ENCODE measurements at regions of chr2 and their contacts with region 1.

Region 1: DNA sequence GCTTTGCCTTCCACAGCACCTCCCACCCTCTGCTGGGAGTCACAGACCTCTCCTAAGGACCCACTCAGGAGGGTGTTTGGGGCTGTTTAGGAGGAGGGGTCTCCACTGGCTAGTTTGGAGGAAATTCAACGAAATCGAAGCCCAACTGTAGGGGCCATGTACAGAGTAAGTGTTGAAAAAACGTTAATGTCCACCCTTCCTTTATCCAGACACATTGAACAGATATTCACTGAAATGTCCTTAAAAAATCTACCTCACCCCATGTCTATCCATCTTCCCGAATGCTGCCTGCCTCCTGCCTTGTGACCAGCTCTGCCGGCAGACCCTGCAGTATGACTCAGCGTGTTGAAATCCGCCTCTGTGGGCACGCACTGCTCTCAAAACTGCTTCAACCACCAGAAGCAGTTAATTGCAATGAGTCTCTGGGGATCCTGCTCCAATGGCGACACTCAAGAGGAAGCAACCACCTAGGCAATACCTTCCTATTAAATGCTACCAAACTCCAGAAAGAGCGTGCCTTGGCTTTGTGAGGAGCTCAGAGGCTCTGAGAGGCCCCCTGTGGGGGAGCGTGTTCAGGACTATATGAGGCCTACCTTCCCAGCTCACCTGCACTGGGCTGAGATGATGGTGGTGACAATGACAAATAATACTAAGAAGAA is 61.4 kb upstream of the RTN4 start:
- DNase-seq: peak; percentile 77 to 96
- H3K4me3 ChIP-seq: peak overlapping the region; percentile 11; the same call in 1 of the 2 replicates
- H3K27ac ChIP-seq: peak overlapping the region; percentile 75
- H3K4me1 ChIP-seq: peaks cover 98% of the 10 kb centered on the region
- H3K27me3 ChIP-seq: no peaks in the 10 kb centered on the region
- CTCF ChIP-seq: no peak

Region 2: GRCh38 chr2:54240515-54241469 is 870.9 kb before region 1 on chr2:
- CTCF ChIA-PET with region 1: no interaction called
- POLR2A ChIA-PET with region 1: no interaction called
- intact Hi-C with region 1: no loop called
- DNase-seq: no peak
- H3K4me3 ChIP-seq: no peak overlapping the region
- H3K27ac ChIP-seq: no peak overlapping the region
- H3K4me1 ChIP-seq: no peaks in the 10 kb centered on the region
- H3K27me3 ChIP-seq: no peaks in the 10 kb centered on the region
- CTCF ChIP-seq: no peak

Region 3: GRCh38 chr2:55092439-55092838 is 19.3 kb before region 1 on chr2:
- CTCF ChIA-PET with region 1: interaction called, 4 read pairs
- POLR2A ChIA-PET with region 1: interaction called, 5 read pairs
- intact Hi-C with region 1: loop called (anchors 1 kb)
- DNase-seq: peak; percentile 53 to 91
- H3K4me3 ChIP-seq: peak overlapping the region; percentile 19; the same call in 1 of the 2 replicates
- H3K27ac ChIP-seq: peak overlapping the region; percentile 98
- H3K4me1 ChIP-seq: peaks cover 84% of the 10 kb centered on the region
- H3K27me3 ChIP-seq: no peaks in the 10 kb centered on the region
- CTCF ChIP-seq: no peak

Measured in PC-9 (cell line).